SK-N-SH (cell line): ENCODE measurements at regions of chr2 and their contacts with region 1.

Region 1: DNA sequence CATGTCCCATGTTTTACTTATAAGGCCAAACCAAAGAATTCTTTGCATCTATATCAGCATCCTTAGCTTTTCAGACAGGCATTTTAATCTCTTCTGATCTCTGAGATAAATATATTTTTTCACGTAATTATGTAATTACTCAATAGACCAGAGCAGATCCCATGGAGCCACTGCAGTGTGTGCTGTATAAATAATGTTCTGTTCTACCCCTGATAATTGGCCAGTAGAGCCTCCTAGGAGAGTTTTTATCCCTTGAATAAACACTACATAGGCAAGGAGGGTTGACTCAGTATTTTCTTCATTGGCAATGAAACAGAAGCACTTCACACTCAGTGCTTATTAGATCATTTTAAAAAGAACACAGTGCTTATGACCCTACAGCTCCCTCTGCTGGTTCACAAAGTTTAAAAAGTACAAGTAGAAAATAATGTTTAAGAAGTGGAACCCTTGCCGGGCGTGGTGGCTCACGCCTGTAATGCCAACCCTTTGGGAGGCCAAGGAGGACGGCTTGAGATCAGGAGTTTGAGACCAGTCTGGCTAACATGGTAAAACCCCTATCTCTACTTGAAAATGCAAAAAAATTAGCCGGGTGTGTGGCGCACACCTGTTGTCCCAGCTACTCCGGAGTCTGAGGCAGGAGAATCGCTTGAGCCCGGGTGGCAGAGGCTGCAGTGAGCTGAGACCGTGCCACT is 91.9 kb downstream of the PPP1R1C start:
- DNase-seq: peak; percentile 28
- H3K4me3 ChIP-seq: no peak overlapping the region; a peak in 1 of 4 replicates
- H3K27ac ChIP-seq: peak overlapping the region in 1 of 2 experiments; percentile 3; a peak in 1 of 4 replicates
- H3K4me1 ChIP-seq: peaks cover 0 to 9% of the 10 kb centered on the region in 2 experiments; a peak in 2 of 4 replicates
- H3K27me3 ChIP-seq: no peaks in the 10 kb centered on the region
- CTCF ChIP-seq: peak; percentile 83
- EP300 ChIP-seq: 0 out of 4 replicates have a peak, but pooled peaks of 1 of the 2 experiments have one; percentile 29
- RAD21 ChIP-seq: peak; percentile 77

Region 2: DNA sequence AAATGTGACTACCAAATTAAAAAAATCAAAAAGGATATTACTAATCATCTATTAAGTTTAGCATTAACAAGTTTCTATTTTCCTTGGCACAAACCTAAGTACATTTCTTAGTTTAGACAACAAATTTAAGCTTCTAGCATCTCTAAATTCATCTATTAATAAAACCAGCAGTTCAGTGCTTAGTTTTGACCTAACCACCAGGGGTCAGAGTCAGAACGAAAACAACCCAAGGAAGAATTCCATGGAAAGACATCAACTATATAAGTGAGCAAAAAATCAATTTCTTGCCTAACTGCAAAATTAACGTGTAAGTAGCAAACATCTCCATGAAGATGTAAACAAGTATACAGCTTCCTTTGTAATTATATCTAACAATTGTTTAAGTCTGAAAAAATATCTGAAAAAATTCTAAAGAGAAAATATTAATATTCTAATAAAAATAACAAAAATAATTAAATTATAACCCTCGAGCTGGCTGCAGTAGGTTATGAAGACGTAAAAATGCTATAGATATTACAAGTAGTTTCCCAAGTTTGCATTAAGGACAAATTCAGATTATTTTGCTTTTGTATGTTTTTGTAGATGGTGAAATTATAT is 504.4 kb before region 1 on chr2:
- CTCF ChIA-PET with region 1: interaction called, 10 read pairs
- POLR2A ChIA-PET with region 1: no interaction called
- DNase-seq: peak; percentile 26
- H3K4me3 ChIP-seq: no peak overlapping the region; a peak in 1 of 4 replicates
- H3K27ac ChIP-seq: no peak overlapping the region
- H3K4me1 ChIP-seq: peaks cover 0 to 3% of the 10 kb centered on the region in 2 experiments; a peak in 1 of 4 replicates
- H3K27me3 ChIP-seq: no peaks in the 10 kb centered on the region
- CTCF ChIP-seq: peak; percentile 73
- EP300 ChIP-seq: no peak
- RAD21 ChIP-seq: peak; percentile 86

Region 3: DNA sequence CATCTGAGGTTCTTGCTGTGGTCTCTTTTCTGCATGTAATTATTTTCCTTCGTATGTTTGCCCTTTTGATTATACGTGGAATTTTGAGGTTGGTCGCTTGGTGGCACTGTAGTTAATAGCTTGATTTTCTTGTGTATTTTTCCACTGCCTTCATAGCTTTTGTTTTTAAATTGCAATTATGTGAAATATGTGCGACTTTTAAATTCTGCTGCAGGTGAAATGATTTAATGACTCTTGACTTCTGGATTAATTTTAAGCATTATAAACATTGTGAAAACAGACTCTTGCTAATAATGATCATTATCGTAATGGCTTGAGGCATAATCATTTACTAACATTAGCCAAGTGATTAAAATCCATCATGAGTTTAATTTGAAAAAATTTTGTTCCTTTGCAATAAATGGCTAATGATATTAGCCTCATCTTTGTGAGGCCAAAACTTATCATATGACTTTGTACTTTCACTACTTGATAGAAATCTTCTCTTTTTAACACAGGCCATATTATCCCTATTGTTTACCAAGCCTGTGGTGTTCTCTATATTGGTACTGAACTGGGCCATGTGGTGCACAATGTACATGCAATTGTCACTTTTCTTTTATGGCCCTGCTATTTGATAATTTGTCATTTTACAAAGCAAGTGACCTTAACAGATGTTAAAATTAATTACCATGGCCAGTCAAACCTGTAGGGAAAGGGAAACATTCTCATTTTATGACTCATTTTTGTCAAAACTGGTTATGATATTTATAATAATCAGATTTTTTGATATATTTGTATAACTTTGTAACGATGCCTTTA is 334.5 kb before region 1 on chr2:
- CTCF ChIA-PET with region 1: interaction called, 38 read pairs
- POLR2A ChIA-PET with region 1: no interaction called
- DNase-seq: peak; percentile 35
- H3K4me3 ChIP-seq: no peak overlapping the region; a peak in 1 of 4 replicates
- H3K27ac ChIP-seq: peak overlapping the region in 1 of 2 experiments; percentile 62; a peak in 3 of 4 replicates
- H3K4me1 ChIP-seq: peaks cover 8 to 19% of the 10 kb centered on the region in 2 experiments; a peak in 2 of 4 replicates
- H3K27me3 ChIP-seq: no peaks in the 10 kb centered on the region
- CTCF ChIP-seq: peak; percentile 83
- EP300 ChIP-seq: 0 out of 4 replicates have a peak, but pooled peaks of 1 of the 2 experiments have one; percentile 2
- RAD21 ChIP-seq: peak; percentile 87

Region 4: DNA sequence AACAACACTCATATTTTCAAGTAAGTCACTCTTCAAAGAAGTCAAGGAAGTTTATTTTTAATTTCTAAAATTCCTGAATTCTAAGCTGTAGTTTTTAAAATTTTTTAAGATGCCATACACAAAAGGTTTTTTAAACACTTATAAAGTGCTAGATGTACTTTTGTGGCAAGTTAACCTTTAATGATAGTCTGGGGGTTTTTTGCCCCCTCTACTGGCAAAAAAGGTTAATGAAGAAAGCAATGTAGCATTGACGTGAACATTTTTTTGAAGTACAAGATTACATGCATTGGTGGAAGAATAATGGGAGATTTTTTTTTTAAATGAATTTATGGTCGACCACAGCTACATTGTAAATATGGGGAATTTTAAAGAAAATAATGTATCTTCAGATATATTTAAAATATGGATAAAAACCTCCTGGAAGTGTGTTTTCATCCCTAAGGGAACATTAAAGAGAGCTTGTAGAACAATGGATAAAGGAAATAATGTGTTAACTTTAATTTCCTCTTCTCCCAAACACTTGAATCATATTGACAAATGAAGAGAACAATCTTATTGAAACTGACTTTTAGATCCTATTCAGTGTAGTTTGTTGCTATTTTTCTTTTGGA is 173.5 kb before region 1 on chr2:
- CTCF ChIA-PET with region 1: interaction called, 11 read pairs
- POLR2A ChIA-PET with region 1: no interaction called
- DNase-seq: peak; percentile 34
- H3K4me3 ChIP-seq: no peak overlapping the region; a peak in 1 of 4 replicates
- H3K27ac ChIP-seq: peak overlapping the region; percentile 14; a peak in 1 of 4 replicates
- H3K4me1 ChIP-seq: peaks cover 0 to 3% of the 10 kb centered on the region in 2 experiments; a peak in 2 of 4 replicates
- H3K27me3 ChIP-seq: no peaks in the 10 kb centered on the region
- CTCF ChIP-seq: peak; percentile 78
- EP300 ChIP-seq: no peak
- RAD21 ChIP-seq: peak; percentile 70

Region 5: DNA sequence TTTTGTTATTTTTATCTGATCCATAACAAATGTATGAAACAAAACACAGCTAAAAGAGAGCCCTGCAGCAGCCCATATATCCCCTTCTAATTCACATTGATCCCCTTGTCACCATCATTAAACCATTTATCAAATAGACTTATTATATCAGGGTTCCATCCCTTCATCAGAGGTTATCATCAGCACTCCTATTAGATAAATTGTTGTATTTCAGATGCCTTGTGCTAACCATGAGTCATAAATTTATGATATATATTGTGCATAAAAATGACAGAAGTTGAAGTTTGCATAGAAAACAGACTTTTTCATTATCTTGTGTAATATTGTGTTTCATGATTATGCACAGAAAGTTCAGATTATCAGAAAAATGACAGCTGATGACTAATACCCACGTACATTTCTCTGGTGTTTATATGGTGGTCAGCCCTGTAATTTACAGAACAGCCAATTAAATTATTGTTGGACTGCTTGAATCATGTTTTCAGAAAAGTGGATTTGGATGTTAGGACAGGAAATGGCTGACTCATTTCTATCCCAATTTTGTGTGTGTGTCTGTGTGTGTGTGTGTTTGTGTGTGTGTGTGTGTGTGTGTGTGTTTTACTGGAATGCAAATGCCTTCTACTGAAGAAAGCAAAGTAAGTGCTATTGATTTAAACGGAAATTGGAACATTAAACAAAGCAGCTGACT is 11.1 kb before region 1 on chr2:
- CTCF ChIA-PET with region 1: interaction called, 22 read pairs
- POLR2A ChIA-PET with region 1: no interaction called
- DNase-seq: peak; percentile 8
- H3K4me3 ChIP-seq: no peak overlapping the region
- H3K27ac ChIP-seq: peak overlapping the region; percentile 39 to 43; a peak in 2 of 4 replicates
- H3K4me1 ChIP-seq: peaks cover 16 to 26% of the 10 kb centered on the region in 2 experiments
- H3K27me3 ChIP-seq: no peaks in the 10 kb centered on the region
- CTCF ChIP-seq: no peak
- EP300 ChIP-seq: peak; percentile 83 to 84
- RAD21 ChIP-seq: no peak

Region 6: GRCh38 chr2:182088681-182089320 is 11.2 kb after region 1 on chr2:
- CTCF ChIA-PET with region 1: interaction called, 17 read pairs
- POLR2A ChIA-PET with region 1: no interaction called
- DNase-seq: no peak
- H3K4me3 ChIP-seq: no peak overlapping the region
- H3K27ac ChIP-seq: no peak overlapping the region
- H3K4me1 ChIP-seq: no peaks in the 10 kb centered on the region
- H3K27me3 ChIP-seq: no peaks in the 10 kb centered on the region
- CTCF ChIP-seq: no peak
- EP300 ChIP-seq: no peak
- RAD21 ChIP-seq: no peak

Region 7: GRCh38 chr2:182220335-182220734 is 142.7 kb after region 1 on chr2:
- CTCF ChIA-PET with region 1: no interaction called
- POLR2A ChIA-PET with region 1: no interaction called
- DNase-seq: no peak
- H3K4me3 ChIP-seq: no peak overlapping the region
- H3K27ac ChIP-seq: no peak overlapping the region
- H3K4me1 ChIP-seq: no peaks in the 10 kb centered on the region
- H3K27me3 ChIP-seq: no peaks in the 10 kb centered on the region
- CTCF ChIP-seq: no peak
- EP300 ChIP-seq: no peak
- RAD21 ChIP-seq: no peak